AG04450 (cell line): ENCODE measurements at regions of chr20 and their contacts with region 1.

Region 1: GRCh38 chr20:63775096-63775978 is 35.8 kb downstream of the SLC2A4RG start:
- DNase-seq: no peak
- H3K4me3 ChIP-seq: peak overlapping the region; percentile 27; the same call in 1 of the 2 replicates
- H3K27ac ChIP-seq: no peak overlapping the region
- H3K27me3 ChIP-seq: no peaks in the 10 kb centered on the region
- CTCF ChIP-seq: peak; percentile 82

Region 2: GRCh38 chr20:63785691-63786131 is 10.4 kb after region 1 on chr20:
- CTCF ChIA-PET with region 1: interaction called, 16 read pairs
- POLR2A ChIA-PET with region 1: no interaction called
- DNase-seq: no peak
- H3K4me3 ChIP-seq: no peak overlapping the region
- H3K27ac ChIP-seq: no peak overlapping the region
- H3K27me3 ChIP-seq: no peaks in the 10 kb centered on the region
- CTCF ChIP-seq: no peak

Region 3: GRCh38 chr20:63791497-63792156 is 16.3 kb after region 1 on chr20:
- CTCF ChIA-PET with region 1: interaction called, 12 read pairs
- POLR2A ChIA-PET with region 1: no interaction called
- DNase-seq: no peak
- H3K4me3 ChIP-seq: no peak overlapping the region
- H3K27ac ChIP-seq: no peak overlapping the region
- H3K27me3 ChIP-seq: no peaks in the 10 kb centered on the region
- CTCF ChIP-seq: no peak